Right ventricle myocardium superior (tissue), 1 donor: ENCODE measurements at regions of chr7 and their contacts with region 1.

Region 1: GRCh38 chr7:34227525-34227924 is 322.2 kb downstream of the BMPER start:
- DNase-seq: no peak
- ATAC-seq: no peak

Region 2: GRCh38 chr7:33346055-33346454 is 881.5 kb before region 1 on chr7:
- intact Hi-C with region 1: no loop called
- DNase-seq: no peak
- ATAC-seq: no peak

Region 3: DNA sequence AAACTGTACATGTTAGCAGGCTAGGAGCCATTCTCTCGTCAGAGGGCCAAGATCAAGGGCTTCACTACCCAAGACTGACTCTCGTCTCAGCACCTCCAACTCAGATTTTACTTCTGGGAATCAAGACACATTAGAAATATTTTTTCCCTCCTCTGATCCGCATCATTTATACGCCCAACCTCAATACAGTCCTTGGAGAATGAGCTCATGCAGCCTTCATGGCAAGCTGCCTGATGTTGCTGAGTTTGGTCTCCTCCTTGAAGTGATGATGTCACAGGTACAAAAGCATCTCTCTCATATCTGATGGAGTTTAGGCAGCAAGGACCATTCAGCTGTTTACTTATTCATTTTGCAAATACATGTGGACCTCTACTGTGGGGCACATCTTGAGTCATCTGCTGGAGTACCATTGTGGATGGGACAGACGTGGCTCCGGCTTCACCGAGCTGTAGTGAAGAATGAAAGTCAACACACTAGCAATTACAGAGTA is 208.2 kb before region 1 on chr7:
- intact Hi-C with region 1: no loop called
- DNase-seq: no peak
- ATAC-seq: no peak

Region 4: GRCh38 chr7:34165929-34166550 is 61.5 kb before region 1 on chr7:
- intact Hi-C with region 1: loop called (anchors 10 kb)
- DNase-seq: no peak
- ATAC-seq: peak; percentile 48

Region 5: DNA sequence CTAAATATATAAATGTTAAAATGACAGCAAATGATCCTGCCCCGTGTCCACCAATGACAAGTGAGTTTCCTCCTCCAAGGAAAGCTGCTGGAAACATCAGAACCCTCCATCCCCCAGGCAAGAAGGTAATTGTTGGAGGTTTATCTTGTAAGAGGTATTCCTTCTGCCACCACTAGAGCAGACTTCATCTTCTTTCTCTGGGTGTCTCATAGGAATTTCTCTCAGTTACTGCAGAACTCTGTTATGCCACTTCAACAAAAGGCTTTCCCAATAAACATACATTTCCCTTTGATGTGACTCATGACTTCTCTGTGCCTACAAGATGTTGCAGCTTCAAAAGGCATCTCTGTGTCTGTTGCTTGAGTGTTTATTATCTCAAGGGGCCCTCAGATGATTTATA is 43.1 kb before region 1 on chr7:
- intact Hi-C with region 1: no loop called
- DNase-seq: no peak
- ATAC-seq: no peak

Region 6: GRCh38 chr7:34696415-34696814 is 468.9 kb after region 1 on chr7:
- intact Hi-C with region 1: no loop called
- DNase-seq: no peak
- ATAC-seq: no peak